Head of caudate nucleus (tissue), 42 donors: ENCODE measurements at regions of chr10 and their contacts with region 1.

Region 1: DNA sequence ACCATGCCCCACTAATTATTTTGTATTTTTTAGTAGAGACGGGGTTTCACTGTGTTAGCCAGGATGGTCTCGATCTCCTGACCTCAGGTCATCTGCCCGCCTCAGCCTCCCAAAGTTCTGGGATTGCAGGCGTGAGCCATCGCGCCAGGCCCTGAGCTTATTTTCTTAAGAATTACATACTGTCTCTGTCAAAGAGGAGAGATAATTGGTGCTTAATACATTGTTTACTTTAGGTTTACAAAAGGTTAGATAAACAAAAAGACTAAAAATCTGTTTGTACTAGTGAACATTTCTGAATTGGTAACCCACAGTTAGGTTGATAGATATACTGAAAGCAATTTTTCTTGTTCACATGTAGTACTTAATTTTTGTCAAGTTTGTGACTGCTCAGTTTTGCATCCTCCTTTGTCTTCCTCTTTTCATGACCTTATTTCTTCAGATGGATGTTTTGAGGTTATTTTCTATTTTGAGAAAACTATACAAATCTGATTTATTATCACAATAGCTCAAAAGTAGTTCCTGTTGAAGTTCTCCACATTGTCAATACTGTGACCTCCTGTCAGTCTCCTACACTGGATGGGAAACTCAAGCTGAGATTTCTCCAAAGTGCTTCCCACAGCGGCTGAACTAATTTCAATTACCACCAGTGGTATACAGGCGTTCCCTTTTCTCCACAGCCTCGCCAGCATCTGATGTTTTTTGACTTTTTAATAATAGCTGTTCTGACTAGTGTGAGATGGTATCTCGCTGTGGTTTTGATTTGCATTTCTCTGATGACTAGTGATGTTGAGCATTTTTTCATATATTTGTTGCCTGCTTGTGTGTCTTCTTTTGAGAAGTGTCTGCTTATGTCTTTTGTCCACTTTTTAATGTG is 22.5 kb downstream of the HHEX start:
- DNase-seq: no peak

Region 2: DNA sequence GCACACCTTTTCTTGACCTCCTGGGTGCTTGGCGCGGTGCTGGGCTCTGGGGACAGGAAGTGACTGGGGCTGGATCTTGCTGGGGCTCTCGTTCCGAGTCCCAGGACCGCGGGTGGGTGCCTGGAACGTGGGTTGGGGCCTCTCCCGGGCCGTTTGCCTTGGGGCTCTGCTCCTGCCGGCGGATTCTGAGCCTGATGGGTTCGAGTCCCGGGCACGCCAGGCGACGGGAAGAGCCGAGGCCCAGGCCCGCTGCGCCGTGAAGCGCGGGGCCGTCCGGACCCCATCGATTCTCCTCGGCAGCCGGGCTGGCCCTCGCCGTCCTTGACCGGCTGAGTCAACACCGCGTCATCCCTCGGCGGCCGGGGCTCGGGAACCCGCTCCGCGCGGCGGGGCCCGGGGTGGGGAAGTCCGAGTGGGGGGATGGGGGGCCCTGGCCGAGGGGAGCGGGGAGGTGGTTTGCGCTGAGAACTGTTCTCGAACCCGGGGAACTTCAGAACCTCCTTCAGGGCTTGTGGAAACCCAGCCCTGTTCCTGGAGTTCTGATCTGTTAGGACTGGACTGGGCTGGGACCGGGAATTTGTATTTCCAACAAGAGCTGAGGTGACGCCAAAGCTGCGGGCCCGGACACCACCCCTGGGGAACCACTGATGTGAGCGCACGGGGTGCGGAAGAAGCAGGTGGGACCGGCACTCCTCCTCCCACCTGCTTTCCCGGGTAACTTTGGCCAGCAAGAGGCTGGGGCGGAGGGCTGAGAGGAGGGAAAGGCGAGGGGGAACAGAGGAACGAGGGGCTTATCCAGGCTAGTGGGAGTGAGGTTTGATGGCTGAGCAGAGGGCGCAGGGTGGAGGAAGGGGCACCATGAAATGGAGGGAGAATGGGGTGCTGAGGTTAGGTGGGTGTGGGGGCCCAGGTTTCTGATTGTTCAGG is 16.3 kb before region 1 on chr10:
- intact Hi-C with region 1: loop called (anchors 2 kb)
- DNase-seq: no peak